Calu3 (cell line): ENCODE measurements at regions of chr6 and their contacts with region 1.

Region 1: DNA sequence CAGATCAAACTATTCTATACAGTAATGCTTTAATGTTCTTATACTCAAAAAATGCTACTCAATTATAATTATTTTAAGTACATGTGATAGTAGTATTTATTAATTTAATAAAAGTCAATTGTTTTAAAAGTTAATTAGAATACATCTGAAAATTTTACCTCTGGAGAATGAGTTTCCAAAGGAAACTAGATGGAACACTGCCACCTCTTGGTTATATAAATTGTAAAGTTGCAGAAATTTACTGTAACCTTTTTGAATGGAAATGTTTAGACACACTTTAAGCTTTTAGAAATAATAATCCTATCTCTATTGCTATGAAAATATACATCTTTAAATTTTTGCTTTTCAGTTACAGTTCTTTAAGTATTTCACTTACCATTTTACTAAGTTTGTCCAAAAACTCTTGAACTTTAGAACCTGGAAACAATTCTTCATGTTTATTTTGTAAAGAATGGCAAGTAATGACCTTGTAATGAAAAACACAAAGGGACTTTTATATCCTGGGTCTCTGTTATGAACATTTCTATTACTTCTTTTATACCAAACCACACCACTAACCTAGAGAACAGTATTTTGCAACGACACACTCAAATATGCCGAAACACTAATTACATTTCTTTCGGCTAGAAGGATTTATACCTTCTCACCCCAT is 10.9 kb upstream of the BMP5 start:
- DNase-seq: no peak
- H3K4me3 Mint-ChIP-seq: no peak overlapping the region
- H3K27ac Mint-ChIP-seq: no peak overlapping the region
- H3K4me1 Mint-ChIP-seq: peaks cover 18% of the 10 kb centered on the region
- H3K27me3 Mint-ChIP-seq: no peaks in the 10 kb centered on the region
- CTCF ChIP-seq: no peak

Region 2: GRCh38 chr6:55276745-55277530 is 609.4 kb before region 1 on chr6:
- CTCF ChIA-PET with region 1: no interaction called
- intact Hi-C with region 1: loop called (anchors 5 kb)
- DNase-seq: peak; percentile 43
- H3K4me3 Mint-ChIP-seq: no peak overlapping the region
- H3K27ac Mint-ChIP-seq: no peak overlapping the region
- H3K4me1 Mint-ChIP-seq: no peaks in the 10 kb centered on the region
- H3K27me3 Mint-ChIP-seq: no peaks in the 10 kb centered on the region
- CTCF ChIP-seq: peak; percentile 56

Region 3: GRCh38 chr6:55617272-55617671 is 269.0 kb before region 1 on chr6:
- CTCF ChIA-PET with region 1: no interaction called
- intact Hi-C with region 1: loop called (anchors 1 kb)
- DNase-seq: peak; percentile 42
- H3K4me3 Mint-ChIP-seq: no peak overlapping the region
- H3K27ac Mint-ChIP-seq: no peak overlapping the region
- H3K4me1 Mint-ChIP-seq: no peaks in the 10 kb centered on the region
- H3K27me3 Mint-ChIP-seq: no peaks in the 10 kb centered on the region
- CTCF ChIP-seq: peak; percentile 37